ENCODE measurements at regions of chr1 and their contacts with region 1.

Region 1: GRCh38 chr1:246002725-246003441 is 504.2 kb downstream of the SMYD3 start:
- DNase-seq: peak; percentile 94
- ATAC-seq: peak; percentile 58
- H3K4me3 ChIP-seq: no peak overlapping the region
- H3K27ac ChIP-seq: no peak overlapping the region
- H3K4me1 ChIP-seq: peaks cover 24% of the 10 kb centered on the region
- H3K27me3 ChIP-seq: no peaks in the 10 kb centered on the region
- CTCF ChIP-seq: peak; percentile 97

Region 2: GRCh38 chr1:245079021-245079609 is 923.8 kb before region 1 on chr1:
- CTCF ChIA-PET with region 1: no interaction called
- POLR2A ChIA-PET with region 1: no interaction called
- intact Hi-C with region 1: loop called (anchors 1 kb)
- DNase-seq: peak; percentile 82
- ATAC-seq: peak; percentile 57
- H3K4me3 ChIP-seq: no peak overlapping the region
- H3K27ac ChIP-seq: no peak overlapping the region
- H3K4me1 ChIP-seq: peaks cover 6% of the 10 kb centered on the region; the same call in 1 of the 2 replicates
- H3K27me3 ChIP-seq: no peaks in the 10 kb centered on the region
- CTCF ChIP-seq: peak; percentile 89

Region 3: DNA sequence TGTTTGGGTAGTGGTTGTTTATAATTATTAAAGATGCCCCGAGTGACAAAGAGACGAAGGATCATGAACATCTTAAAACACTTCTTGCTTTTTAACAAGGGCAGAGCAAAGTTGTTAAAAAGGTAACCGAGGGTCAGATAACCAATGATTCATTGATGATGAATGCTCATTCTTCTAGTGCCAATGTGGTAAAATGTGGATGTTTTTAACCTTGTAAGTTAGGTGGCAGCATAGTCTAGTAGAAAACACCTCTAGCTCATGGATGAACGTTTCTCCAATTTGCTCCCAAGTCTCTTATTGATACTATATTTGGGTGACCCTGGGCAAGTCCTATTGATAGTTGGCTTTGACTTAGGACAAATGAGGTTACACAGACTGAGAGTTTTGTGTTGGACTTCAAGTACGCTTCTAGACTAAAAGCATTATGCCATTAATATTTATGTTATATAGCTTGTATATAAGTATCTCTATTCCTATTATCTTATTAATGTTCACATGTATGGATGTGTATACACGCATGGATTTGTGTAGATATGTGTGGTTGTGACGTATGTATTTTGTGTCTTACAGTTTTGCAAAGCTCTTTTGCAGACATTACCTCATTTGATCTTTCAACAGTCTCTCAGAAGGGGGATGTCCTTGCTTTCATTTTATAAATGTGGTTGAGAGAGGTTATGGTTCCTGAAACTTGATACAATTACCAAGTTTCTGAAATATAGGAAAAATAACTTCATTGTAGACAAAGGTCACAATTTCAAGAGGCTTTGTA is 680.0 kb before region 1 on chr1:
- CTCF ChIA-PET with region 1: no interaction called
- POLR2A ChIA-PET with region 1: no interaction called
- intact Hi-C with region 1: loop called (anchors 1 kb)
- DNase-seq: peak; percentile 71
- ATAC-seq: peak; percentile 88
- H3K4me3 ChIP-seq: no peak overlapping the region
- H3K27ac ChIP-seq: no peak overlapping the region
- H3K4me1 ChIP-seq: no peaks in the 10 kb centered on the region; the same call in 1 of the 2 replicates
- H3K27me3 ChIP-seq: peaks cover 53% of the 10 kb centered on the region
- CTCF ChIP-seq: peak; percentile 54

Region 4: GRCh38 chr1:245704765-245705164 is 298.1 kb before region 1 on chr1:
- CTCF ChIA-PET with region 1: no interaction called
- POLR2A ChIA-PET with region 1: no interaction called
- intact Hi-C with region 1: loop called (anchors 5 kb)
- DNase-seq: peak; percentile 91
- ATAC-seq: peak; percentile 100
- H3K4me3 ChIP-seq: no peak overlapping the region
- H3K27ac ChIP-seq: peak overlapping the region; percentile 23
- H3K4me1 ChIP-seq: peaks cover 16% of the 10 kb centered on the region
- H3K27me3 ChIP-seq: no peaks in the 10 kb centered on the region
- CTCF ChIP-seq: no peak

Region 5: GRCh38 chr1:245858722-245859492 is 144.0 kb before region 1 on chr1:
- CTCF ChIA-PET with region 1: no interaction called
- POLR2A ChIA-PET with region 1: no interaction called
- intact Hi-C with region 1: loop called (anchors 1 kb)
- DNase-seq: peak; percentile 52
- ATAC-seq: peak; percentile 31
- H3K4me3 ChIP-seq: no peak overlapping the region
- H3K27ac ChIP-seq: peak overlapping the region; percentile 71
- H3K4me1 ChIP-seq: peaks cover 35% of the 10 kb centered on the region
- H3K27me3 ChIP-seq: no peaks in the 10 kb centered on the region
- CTCF ChIP-seq: peak; percentile 63

Region 6: GRCh38 chr1:245888809-245889208 is 114.1 kb before region 1 on chr1:
- CTCF ChIA-PET with region 1: interaction called, 4 read pairs
- POLR2A ChIA-PET with region 1: no interaction called
- intact Hi-C with region 1: loop called (anchors 1 kb)
- DNase-seq: peak; percentile 77
- ATAC-seq: peak; percentile 84
- H3K4me3 ChIP-seq: no peak overlapping the region
- H3K27ac ChIP-seq: no peak overlapping the region
- H3K4me1 ChIP-seq: no peaks in the 10 kb centered on the region
- H3K27me3 ChIP-seq: no peaks in the 10 kb centered on the region
- CTCF ChIP-seq: peak; percentile 87

Region 7: DNA sequence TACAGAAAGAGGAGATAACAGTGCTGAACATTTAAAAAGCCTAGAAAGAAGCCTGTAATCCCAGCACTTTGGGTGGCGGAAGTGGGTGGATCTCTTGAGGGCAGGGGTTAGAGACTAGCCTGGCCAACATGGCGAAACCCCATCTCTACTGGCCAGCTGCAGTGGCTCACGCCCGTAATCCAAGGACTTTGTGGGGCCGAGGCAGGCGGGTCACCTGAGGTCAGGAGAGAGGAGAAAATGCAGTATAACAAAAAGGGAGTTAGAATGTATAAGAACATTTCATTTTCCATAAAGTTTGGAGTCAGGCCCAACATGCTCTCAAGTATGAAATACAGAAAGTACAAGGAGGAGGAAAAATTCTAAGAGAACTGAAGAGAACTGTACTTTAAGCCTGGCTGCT is 369.7 kb after region 1 on chr1:
- CTCF ChIA-PET with region 1: no interaction called
- POLR2A ChIA-PET with region 1: no interaction called
- intact Hi-C with region 1: no loop called
- DNase-seq: no peak
- ATAC-seq: no peak
- H3K4me3 ChIP-seq: no peak overlapping the region
- H3K27ac ChIP-seq: no peak overlapping the region
- H3K4me1 ChIP-seq: no peaks in the 10 kb centered on the region
- H3K27me3 ChIP-seq: no peaks in the 10 kb centered on the region
- CTCF ChIP-seq: no peak

Measured in PC-3 (cell line).